Naive thymus-derived CD4-positive, alpha-beta T cell (primary cell): ENCODE measurements at regions of chr13 and their contacts with region 1.

Region 1: DNA sequence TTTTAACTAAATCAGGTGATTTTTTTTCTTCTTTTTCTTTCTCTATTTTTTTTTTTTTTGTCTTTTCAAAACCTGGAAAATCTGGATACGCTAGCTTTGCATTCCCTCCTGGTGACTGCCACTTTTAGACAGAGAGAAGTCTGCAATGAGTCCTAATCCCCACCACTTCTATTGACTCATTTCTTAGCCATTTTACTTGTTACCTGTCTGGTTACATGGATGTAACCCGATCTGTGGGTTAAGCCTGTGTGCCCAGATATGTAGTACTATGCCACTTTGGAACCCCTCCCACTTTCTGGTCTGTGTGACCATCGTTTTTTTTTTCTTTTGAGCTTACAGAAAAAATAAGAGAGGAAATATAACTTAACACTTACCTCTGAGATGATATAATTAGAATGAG is 817.8 kb upstream of the PCDH9 start:
- DNase-seq: no peak
- ATAC-seq: no peak
- H3K4me3 ChIP-seq: no peak overlapping the region
- H3K4me3 Mint-ChIP-seq: no peak overlapping the region
- H3K27ac ChIP-seq: no peak overlapping the region
- H3K27ac Mint-ChIP-seq: no peak overlapping the region
- H3K4me1 ChIP-seq: no peaks in the 10 kb centered on the region
- H3K4me1 Mint-ChIP-seq: no peaks in the 10 kb centered on the region
- H3K27me3 ChIP-seq: no peaks in the 10 kb centered on the region
- H3K27me3 Mint-ChIP-seq: no peaks in the 10 kb centered on the region

Region 2: DNA sequence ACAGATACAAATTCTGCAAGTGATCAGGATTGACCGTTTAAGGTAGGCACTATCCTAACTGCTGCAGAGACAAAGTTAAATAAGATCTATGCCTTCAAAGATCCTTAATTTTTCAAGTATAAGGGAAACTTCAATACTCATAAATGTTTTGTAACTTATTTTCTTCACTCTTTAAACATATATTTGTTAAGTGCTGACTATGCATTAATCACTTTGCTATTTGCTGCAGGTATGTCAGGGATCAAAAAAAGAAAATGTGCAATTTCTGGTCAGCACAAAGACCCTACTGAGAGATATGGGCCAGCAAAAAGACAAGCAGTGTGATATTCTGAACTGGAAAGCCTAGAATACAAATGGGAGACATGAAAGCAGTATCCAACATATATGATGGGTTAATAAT is 61.7 kb before region 1 on chr13:
- CTCF ChIA-PET with region 1: no interaction called
- POLR2A ChIA-PET with region 1: no interaction called
- intact Hi-C with region 1: loop called in 1 of 2 experiments (anchors 10 kb)
- DNase-seq: no peak
- ATAC-seq: no peak
- H3K4me3 ChIP-seq: no peak overlapping the region
- H3K4me3 Mint-ChIP-seq: no peak overlapping the region
- H3K27ac ChIP-seq: no peak overlapping the region
- H3K27ac Mint-ChIP-seq: no peak overlapping the region
- H3K4me1 ChIP-seq: no peaks in the 10 kb centered on the region
- H3K4me1 Mint-ChIP-seq: no peaks in the 10 kb centered on the region
- H3K27me3 ChIP-seq: no peaks in the 10 kb centered on the region
- H3K27me3 Mint-ChIP-seq: no peaks in the 10 kb centered on the region